ENCODE measurements at regions of chr22 and their contacts with region 1.

Region 1: DNA sequence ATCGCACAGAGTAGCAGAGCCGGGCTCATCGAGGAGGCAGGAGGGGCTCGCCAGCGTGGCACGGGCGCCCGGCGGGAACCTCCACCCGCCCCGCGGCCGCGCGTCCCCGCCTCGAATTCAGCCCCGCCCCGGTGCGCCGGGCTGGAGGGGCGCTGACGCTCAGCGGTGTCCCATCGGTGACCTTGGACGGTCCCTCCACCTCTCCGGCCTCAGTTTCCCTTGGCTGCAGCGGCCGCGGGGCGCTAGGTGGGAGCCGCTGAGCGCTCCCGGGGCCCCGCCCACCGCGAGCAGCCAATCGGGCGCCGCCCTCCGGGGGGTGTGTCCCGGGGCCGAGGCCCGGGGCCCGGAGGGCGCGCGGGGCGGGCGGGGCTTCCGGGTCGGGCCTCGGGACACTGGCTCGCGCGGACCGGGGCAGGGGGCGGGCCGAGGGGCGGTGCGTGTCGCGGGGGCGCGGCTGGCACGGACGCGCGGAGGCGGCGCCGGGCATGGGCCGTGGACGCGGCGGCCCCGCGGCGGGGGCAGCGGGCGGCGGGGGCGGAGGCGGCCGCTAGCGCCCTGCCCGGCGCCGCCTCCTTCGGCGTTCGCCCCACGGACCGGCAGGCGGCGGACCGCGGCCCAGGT is at the start of gene PPARA:
- DNase-seq: peak; percentile 63 to 96 (median 88)
- ATAC-seq: peak; percentile 75
- H3K4me3 ChIP-seq: peak within 1 kb of the TSS; percentile 87
- H3K4me3 Mint-ChIP-seq: peak within 1 kb of the TSS; percentile 89
- H3K27ac ChIP-seq: peak within 1 kb of the TSS; percentile 21 to 58
- H3K27ac Mint-ChIP-seq: peak within 1 kb of the TSS; percentile 74
- H3K4me1 ChIP-seq: peaks cover 32% of the 10 kb centered on the region
- H3K4me1 Mint-ChIP-seq: peaks cover 14% of the 10 kb centered on the region
- H3K27me3 ChIP-seq: no peaks in the 10 kb centered on the region
- H3K27me3 Mint-ChIP-seq: no peaks in the 10 kb centered on the region
- CTCF ChIP-seq: no peak
- total RNA-seq, gene PPARA: 9.1 to 9.3 TPM

Region 2: DNA sequence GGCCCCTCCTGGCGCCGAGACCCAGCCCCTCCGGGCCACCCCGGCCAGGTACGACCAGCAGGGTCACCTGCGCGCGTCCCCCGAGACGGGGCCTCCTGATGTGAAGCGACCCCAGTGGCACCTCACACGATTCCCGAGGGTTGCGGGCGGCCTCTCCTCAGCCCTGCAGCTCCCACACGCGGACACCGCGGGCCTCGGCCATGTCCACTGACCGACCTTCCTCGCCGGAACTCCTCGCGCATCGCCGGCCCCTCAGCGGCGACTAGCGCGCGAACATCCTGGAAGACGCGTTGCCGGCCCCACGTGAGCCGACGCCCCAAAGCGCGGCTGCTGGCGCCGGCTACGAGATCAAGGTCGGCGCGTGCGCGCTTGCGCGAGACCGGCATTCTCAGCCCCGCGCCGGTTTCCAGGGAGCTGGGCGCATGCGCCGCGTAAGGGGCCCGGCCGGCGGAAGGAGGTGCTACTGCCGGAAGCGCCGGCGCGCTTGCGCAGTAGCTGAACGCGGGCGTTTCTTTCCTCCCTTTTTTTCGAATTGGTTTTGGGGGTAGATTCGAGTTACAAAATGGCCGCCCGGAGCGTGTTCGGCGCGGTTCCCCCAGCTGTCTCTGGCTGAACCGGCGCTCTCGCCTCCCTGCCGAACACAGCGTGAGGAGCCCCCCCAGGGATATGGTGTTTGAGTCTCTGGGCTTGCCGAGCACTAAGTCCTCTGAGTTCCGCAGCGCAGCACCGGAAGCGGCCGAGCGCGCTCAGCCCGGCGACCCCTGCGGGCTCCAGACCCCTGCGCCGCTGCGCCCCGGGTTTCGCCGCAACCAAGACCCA is 986.5 kb before region 1 on chr22 and contains the start of gene NUP50:
- CTCF ChIA-PET with region 1: no interaction called
- POLR2A ChIA-PET with region 1: no interaction called
- intact Hi-C with region 1: loop called in 1 of 2 experiments (anchors 10 kb)
- DNase-seq: peak; percentile 89 to 100 (median 96)
- ATAC-seq: peak; percentile 77
- H3K4me3 ChIP-seq: peak within 1 kb of the TSS; percentile 80
- H3K4me3 Mint-ChIP-seq: peak within 1 kb of the TSS; percentile 97
- H3K27ac ChIP-seq: peak within 1 kb of the TSS; percentile 84 to 85
- H3K27ac Mint-ChIP-seq: peak within 1 kb of the TSS; percentile 93
- H3K4me1 ChIP-seq: peaks cover 56% of the 10 kb centered on the region
- H3K4me1 Mint-ChIP-seq: peaks cover 71% of the 10 kb centered on the region
- H3K27me3 ChIP-seq: no peaks in the 10 kb centered on the region
- H3K27me3 Mint-ChIP-seq: no peaks in the 10 kb centered on the region
- CTCF ChIP-seq: no peak
- total RNA-seq, gene NUP50: 141 TPM

Region 3: GRCh38 chr22:45671768-45672563 is 478.2 kb before region 1 on chr22 and contains the start of gene ATXN10:
- CTCF ChIA-PET with region 1: no interaction called
- POLR2A ChIA-PET with region 1: no interaction called
- intact Hi-C with region 1: loop called in 1 of 2 experiments (anchors 10 kb)
- DNase-seq: peak; percentile 33 to 87 (median 62)
- ATAC-seq: peak; percentile 77
- H3K4me3 ChIP-seq: peak within 1 kb of the TSS; percentile 82
- H3K4me3 Mint-ChIP-seq: peak within 1 kb of the TSS; percentile 92
- H3K27ac ChIP-seq: peak within 1 kb of the TSS in 1 of 2 donors; percentile 35
- H3K27ac Mint-ChIP-seq: peak within 1 kb of the TSS; percentile 91
- H3K4me1 ChIP-seq: peaks cover 22% of the 10 kb centered on the region
- H3K4me1 Mint-ChIP-seq: peaks cover 37% of the 10 kb centered on the region
- H3K27me3 ChIP-seq: no peaks in the 10 kb centered on the region
- H3K27me3 Mint-ChIP-seq: peaks cover 7% of the 10 kb centered on the region
- CTCF ChIP-seq: no peak
- total RNA-seq, gene ATXN10: 43.8 to 48.0 TPM

Region 4: GRCh38 chr22:46071451-46072109 is 78.6 kb before region 1 on chr22:
- CTCF ChIA-PET with region 1: no interaction called
- POLR2A ChIA-PET with region 1: interaction called, 3 read pairs
- intact Hi-C with region 1: loop called in 1 of 2 experiments (anchors 5 kb)
- DNase-seq: peak; percentile 45 to 80 (median 60)
- ATAC-seq: peak; percentile 28
- H3K4me3 ChIP-seq: peak overlapping the region; percentile 38
- H3K4me3 Mint-ChIP-seq: peak overlapping the region; percentile 90
- H3K27ac ChIP-seq: peak overlapping the region in 1 of 2 donors; percentile 46
- H3K27ac Mint-ChIP-seq: peak overlapping the region; percentile 78
- H3K4me1 ChIP-seq: peaks cover 56% of the 10 kb centered on the region
- H3K4me1 Mint-ChIP-seq: peaks cover 55% of the 10 kb centered on the region
- H3K27me3 ChIP-seq: peaks cover 0 to 10% of the 10 kb centered on the region in 2 experiments
- H3K27me3 Mint-ChIP-seq: no peaks in the 10 kb centered on the region
- CTCF ChIP-seq: no peak

Region 5: DNA sequence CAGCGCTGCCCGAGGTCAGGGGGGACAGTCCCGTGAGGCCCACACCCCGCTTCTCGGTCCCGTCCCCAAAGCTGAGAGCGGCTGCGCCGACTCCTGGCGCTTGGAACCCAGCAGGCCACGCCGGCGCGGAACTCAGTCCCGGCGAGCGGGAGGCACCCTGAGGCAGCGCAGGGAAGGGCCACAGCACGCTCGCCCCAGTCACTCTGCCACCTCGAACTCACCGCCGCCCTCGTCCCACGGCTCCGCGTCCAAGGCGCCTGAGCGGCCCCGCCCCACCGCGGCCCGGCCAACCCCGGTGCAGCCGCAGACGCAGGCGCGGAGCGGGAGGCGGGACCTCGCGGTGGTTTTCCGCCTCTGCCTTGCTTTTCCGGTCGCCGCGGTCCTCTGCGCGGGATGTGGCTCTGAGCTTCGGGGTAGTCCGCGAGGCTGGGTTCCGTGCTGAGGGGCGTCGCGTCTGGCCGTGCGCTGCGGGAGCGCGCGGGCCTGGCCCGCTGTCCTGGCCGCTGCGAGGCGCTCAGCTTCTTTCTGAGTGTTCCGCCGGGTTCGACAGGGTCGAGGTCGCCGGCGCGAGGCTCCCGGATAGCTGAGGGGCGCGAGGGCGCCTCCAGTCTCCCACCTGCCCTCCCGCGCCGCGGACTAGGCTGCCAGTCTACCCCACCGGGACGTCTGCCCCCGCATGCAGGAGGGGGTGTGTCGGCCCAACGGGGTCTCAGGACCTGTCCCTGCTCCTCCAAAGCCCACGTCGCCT is 100.1 kb after region 1 on chr22 and contains the start of gene CDPF1:
- CTCF ChIA-PET with region 1: interaction called, 3 read pairs
- POLR2A ChIA-PET with region 1: interaction called, 22 read pairs
- intact Hi-C with region 1: loop called (anchors 1 to 5 kb)
- DNase-seq: peak; percentile 82 to 96 (median 91)
- ATAC-seq: peak; percentile 95
- H3K4me3 ChIP-seq: peak within 1 kb of the TSS; percentile 79
- H3K4me3 Mint-ChIP-seq: peak within 1 kb of the TSS; percentile 86
- H3K27ac ChIP-seq: peak within 1 kb of the TSS in 1 of 2 donors; percentile 65
- H3K27ac Mint-ChIP-seq: peak within 1 kb of the TSS; percentile 76
- H3K4me1 ChIP-seq: peaks cover 31% of the 10 kb centered on the region
- H3K4me1 Mint-ChIP-seq: peaks cover 32% of the 10 kb centered on the region
- H3K27me3 ChIP-seq: no peaks in the 10 kb centered on the region
- H3K27me3 Mint-ChIP-seq: no peaks in the 10 kb centered on the region
- CTCF ChIP-seq: no peak
- total RNA-seq, gene CDPF1: 1.6 to 2.6 TPM

Region 6: DNA sequence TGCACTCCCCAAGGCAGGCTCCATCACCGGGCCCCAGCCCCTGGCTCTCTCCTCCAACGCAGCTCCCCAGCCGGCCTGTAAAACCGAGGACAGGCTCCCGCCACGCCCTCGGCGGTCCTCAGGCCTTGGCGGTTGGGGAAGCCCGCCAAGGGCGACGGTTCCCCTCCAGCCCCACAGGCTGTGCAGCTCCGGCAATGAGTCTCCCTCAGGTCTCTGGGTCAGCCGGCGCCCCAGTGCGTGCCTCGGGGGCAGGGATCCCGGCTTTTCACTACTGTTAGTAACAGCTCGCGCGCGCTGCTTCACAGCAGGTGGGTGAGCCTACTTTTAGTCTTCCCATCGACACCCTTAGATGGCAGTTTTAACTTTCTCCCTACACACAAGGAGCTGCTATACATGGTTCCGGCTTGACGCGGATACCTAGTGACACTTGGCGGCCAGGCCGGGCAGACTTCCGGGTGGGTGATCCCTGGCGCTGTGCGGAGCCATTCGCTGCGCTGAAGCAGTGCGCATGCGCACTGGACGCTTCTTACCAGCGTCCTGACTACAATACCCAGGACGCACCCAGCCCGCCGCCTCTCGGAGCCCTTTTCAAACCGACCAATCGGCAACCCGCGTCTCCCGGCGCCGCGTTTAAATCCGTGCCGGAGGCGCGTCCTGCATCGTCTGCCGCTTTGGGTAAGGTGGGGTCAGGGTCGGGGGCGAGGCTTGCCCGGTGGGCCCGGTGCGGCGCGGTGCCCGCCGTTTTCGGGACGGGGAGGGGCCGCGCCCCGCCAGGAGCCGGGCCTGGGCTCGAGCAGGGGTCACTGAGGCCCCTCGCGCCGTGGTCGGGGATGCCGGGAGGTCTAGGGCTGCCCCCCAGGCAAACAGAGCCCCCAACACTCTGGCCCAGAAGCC is 146.4 kb after region 1 on chr22 and contains the start of gene GTSE1:
- CTCF ChIA-PET with region 1: interaction called, 6 read pairs
- POLR2A ChIA-PET with region 1: interaction called, 6 read pairs
- intact Hi-C with region 1: loop called in 1 of 2 experiments (anchors 1 kb)
- DNase-seq: peak; percentile 93 to 99 (median 97)
- ATAC-seq: peak; percentile 98
- H3K4me3 ChIP-seq: peak within 1 kb of the TSS; percentile 77
- H3K4me3 Mint-ChIP-seq: peak within 1 kb of the TSS; percentile 90
- H3K27ac ChIP-seq: peak within 1 kb of the TSS; percentile 75 to 91
- H3K27ac Mint-ChIP-seq: peak within 1 kb of the TSS; percentile 91
- H3K4me1 ChIP-seq: peaks cover 23% of the 10 kb centered on the region
- H3K4me1 Mint-ChIP-seq: peaks cover 26% of the 10 kb centered on the region
- H3K27me3 ChIP-seq: no peaks in the 10 kb centered on the region
- H3K27me3 Mint-ChIP-seq: peaks cover 4% of the 10 kb centered on the region
- CTCF ChIP-seq: peak; percentile 21
- total RNA-seq, gene GTSE1: 0.14 to 0.89 TPM

Region 7: GRCh38 chr22:46335201-46336118 is 185.3 kb after region 1 on chr22 and contains the start of gene TRMU:
- CTCF ChIA-PET with region 1: no interaction called
- POLR2A ChIA-PET with region 1: interaction called, 3 read pairs
- intact Hi-C with region 1: loop called in 1 of 2 experiments (anchors 1 kb)
- DNase-seq: peak; percentile 34 to 86 (median 70)
- ATAC-seq: peak; percentile 78
- H3K4me3 ChIP-seq: peak within 1 kb of the TSS; percentile 91
- H3K4me3 Mint-ChIP-seq: peak within 1 kb of the TSS; percentile 95
- H3K27ac ChIP-seq: peak within 1 kb of the TSS; percentile 62 to 75
- H3K27ac Mint-ChIP-seq: peak within 1 kb of the TSS; percentile 88
- H3K4me1 ChIP-seq: peaks cover 20% of the 10 kb centered on the region
- H3K4me1 Mint-ChIP-seq: peaks cover 43% of the 10 kb centered on the region
- H3K27me3 ChIP-seq: no peaks in the 10 kb centered on the region
- H3K27me3 Mint-ChIP-seq: no peaks in the 10 kb centered on the region
- CTCF ChIP-seq: no peak
- total RNA-seq, gene TRMU: 65.2 to 65.4 TPM

Region 8: DNA sequence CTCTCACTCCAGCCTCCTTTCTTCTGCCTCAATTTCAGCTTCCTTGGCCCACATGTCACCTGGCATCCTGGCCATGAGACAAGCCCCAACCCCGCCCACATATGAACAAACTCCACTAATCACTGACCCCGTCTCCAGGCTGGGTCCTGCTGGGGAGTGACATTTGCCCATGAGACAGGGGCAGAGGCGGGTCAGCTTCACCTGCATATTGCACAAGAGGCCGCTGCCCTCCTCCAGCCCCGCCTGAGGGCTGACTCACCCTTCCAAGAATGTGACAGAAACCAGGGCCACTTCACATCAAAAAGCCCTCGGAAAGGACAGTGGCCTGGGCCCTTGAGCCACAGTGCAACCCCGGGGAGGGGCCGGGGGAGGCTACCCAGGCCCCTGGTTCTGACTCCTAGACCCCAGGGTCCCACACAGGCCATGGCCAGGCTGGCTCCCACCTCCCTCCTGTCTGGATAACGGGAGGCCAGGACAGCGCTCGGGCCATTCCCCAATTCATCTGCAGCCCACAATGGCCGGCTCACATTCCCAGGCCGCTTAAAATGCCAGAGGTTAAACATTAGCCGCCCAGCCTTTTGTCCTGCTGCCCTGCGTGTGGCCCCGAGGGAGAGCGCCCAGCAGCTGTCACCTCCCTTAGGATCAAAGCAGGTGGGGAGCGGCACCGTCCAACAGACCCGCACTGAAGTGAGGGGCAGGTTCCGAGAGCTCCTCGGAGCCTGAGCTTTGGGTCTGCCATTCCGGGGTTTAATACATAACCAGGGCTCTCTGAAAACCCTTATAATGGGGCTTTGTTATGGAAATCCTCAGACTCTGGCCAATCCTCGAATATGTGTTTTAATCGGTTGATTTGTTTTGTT is 227.7 kb after region 1 on chr22:
- CTCF ChIA-PET with region 1: no interaction called
- POLR2A ChIA-PET with region 1: no interaction called
- intact Hi-C with region 1: no loop called
- DNase-seq: no peak
- ATAC-seq: no peak
- H3K4me3 ChIP-seq: no peak overlapping the region
- H3K4me3 Mint-ChIP-seq: no peak overlapping the region
- H3K27ac ChIP-seq: no peak overlapping the region
- H3K27ac Mint-ChIP-seq: no peak overlapping the region
- H3K4me1 ChIP-seq: peaks cover 19% of the 10 kb centered on the region
- H3K4me1 Mint-ChIP-seq: peaks cover 17% of the 10 kb centered on the region
- H3K27me3 ChIP-seq: no peaks in the 10 kb centered on the region
- H3K27me3 Mint-ChIP-seq: no peaks in the 10 kb centered on the region
- CTCF ChIP-seq: no peak

Measured in CD4-positive, alpha-beta T cell (primary cell).